ENCODE measurements at regions of chr5 and their contacts with region 1.

Region 1: GRCh38 chr5:79020861-79021561 is 35.9 kb upstream of the ARSB start:
- DNase-seq: peak; percentile 41
- H3K4me3 ChIP-seq: peak overlapping the region; percentile 21; the same call in 1 of the 2 replicates
- CTCF ChIP-seq: peak; percentile 75

Region 2: DNA sequence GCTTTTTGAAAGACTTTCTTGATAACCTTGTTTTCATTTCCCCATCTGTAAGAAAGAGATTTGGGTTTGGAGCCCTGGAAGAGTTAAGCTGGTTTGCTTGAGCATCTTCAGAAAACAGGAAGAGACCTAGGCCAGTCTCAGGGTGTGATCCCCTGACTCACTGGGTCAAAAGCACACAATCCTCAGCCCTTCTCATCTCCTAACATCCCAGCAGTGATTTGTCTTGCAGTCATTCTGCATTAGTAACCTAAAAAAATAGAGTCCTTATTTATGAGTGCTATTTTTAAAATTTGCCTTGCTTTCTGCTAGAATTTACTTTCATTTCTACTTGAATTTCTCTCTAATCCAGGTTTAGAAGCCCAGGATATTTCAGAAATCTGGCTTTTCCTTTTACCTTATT is 19.5 kb before region 1 on chr5:
- CTCF ChIA-PET with region 1: interaction called, 19 read pairs
- POLR2A ChIA-PET with region 1: interaction called, 4 read pairs
- DNase-seq: no peak
- H3K4me3 ChIP-seq: no peak overlapping the region
- CTCF ChIP-seq: no peak

Region 3: DNA sequence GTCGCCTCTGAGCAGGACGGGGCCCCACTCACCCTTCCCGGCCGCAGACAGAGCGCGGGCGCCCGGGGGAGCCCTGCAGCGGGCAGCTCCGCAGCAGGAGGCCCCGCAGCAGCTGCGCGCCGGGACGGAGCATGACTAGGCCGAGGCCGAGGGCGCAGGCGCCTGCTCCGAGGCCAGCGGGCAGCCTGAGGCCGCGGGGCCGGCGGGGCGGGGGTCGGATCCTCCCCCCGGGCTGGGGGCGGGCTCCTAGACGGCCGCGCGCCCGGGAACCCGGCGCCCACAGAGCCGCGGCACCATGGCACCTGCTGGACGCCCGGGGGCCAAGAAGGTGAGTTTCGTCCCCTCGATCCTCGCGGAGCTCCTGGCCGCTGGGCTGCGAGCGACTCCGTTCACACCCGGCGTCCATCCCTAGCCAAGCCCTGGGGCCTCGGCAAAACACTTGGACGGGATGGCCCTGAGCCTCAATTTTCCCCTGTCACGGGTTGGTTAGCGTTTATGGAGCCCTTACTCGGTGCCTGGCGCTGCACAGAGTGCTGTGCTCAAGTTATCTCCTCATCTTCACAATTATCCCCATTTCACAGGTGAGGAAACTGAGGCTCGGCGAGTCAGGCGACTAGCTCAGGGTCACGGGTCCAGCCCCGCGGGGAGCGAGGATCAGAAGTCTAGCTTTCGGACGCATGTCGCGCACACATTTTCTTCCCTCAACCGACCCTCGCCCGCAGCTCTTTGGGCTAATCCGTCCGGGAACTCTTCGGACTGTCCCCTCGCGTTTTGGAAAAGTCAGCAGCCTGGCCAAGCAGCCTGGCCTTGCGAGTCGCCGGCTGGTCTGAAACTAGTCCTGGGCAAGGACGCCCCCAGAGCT is 48.7 kb after region 1 on chr5 and contains the starts of genes BHMT2 and DMGDH:
- CTCF ChIA-PET with region 1: interaction called, 16 read pairs
- POLR2A ChIA-PET with region 1: interaction called, 3 read pairs
- DNase-seq: no peak
- H3K4me3 ChIP-seq: peak within 1 kb of the TSS; percentile 47
- CTCF ChIP-seq: no peak

Region 4: DNA sequence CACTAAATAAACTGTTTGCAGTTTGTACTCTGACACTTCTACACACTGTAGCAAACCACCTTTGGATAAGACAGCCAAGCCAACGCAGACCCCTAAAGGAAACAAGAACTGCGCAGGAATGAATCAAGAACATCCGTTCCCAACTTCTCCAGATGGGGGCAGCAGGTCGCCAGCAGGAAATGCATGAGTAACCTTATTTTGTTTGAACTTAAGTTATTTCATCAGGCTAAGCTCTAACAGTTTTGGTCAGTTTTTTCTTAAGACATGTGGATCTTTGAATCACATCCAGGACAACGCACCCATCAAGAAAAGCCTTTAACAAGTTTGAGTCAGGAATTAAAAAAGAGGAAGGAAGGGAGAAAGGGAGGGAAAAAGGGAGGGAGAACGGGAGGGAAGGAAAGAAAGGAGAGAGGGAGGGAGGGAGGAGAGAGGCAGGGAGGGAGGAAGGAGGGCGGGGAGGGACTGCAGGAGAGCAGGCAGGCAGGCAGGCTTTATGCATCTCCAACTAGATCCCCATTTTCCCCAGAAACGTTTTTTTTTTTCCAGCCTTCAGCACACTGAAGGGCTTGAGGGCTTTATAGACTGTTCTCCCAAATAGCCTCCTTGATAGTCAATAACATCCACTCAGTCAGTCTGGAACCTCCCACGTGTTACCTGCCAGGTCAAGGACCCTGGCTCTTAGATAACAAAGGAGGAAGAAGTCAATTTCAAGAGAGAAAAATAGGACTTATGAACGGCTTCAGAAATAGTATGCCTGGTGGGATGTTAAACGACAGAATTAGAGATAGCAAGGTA is 112.8 kb after region 1 on chr5:
- CTCF ChIA-PET with region 1: interaction called, 648 read pairs
- POLR2A ChIA-PET with region 1: no interaction called
- DNase-seq: peak; percentile 31
- H3K4me3 ChIP-seq: peak overlapping the region; percentile 52
- CTCF ChIP-seq: peak; percentile 84

Region 5: DNA sequence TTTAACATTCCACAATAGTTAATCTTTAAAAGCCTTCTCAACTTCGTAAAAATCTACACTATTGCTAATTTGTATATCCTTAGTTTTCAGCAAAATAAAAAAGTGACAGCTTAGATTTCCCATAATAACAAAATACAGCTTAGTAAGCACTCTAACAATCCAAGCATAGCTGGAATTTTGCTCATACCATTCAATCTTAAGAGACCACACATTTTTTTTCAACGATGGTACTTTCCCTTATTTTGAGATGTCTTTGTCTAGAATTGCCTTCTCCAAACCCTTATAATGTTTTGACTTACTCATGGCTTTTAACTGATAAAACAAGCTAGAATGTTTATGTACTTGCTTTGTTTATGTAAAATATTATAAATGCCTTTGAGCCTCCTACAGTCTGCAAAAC is 427.3 kb after region 1 on chr5:
- CTCF ChIA-PET with region 1: interaction called, 27 read pairs
- POLR2A ChIA-PET with region 1: no interaction called
- DNase-seq: peak; percentile 29
- H3K4me3 ChIP-seq: no peak overlapping the region
- CTCF ChIP-seq: no peak

Region 6: DNA sequence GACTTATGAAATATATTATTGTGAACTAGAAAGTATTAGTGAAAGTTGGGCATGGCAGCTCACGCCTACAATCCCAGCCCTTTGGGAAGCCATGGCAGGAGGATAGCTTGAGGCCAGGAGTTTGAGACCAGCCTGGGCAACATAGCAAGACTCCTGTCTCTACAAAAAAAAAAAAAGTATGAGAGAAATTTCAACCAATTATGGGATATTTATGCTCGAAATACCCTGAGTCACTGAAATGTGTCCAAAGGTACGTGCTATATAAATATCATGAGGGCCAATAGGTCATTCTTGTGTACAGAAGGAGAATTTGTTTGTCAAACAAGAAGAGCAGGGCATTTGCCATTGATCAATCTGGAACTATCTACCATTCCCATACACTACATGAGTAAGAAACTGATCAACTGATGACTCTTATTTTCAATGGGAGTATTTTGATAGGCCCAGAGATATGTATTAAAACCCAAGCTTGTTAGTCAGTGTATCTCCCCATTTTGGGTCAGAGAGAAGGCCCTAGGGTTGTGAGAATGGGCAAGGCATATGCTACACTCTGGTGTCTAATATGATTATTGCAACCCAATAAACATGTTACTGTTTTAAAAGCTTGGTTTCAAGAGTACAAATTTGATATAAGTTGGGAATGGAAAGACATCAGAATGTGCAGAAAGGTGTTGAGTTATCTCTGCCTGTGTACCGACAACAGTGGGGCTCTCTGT is 514.6 kb after region 1 on chr5:
- CTCF ChIA-PET with region 1: interaction called, 16 read pairs
- POLR2A ChIA-PET with region 1: no interaction called
- DNase-seq: no peak
- H3K4me3 ChIP-seq: no peak overlapping the region
- CTCF ChIP-seq: no peak

Measured in AG04449 (cell line).